ENCODE measurements at regions of chr7 and their contacts with region 1.

Region 1: GRCh38 chr7:4919969-4920766 is 36.7 kb upstream of the RADIL start:
- DNase-seq: no peak
- ATAC-seq: no peak

Region 2: DNA sequence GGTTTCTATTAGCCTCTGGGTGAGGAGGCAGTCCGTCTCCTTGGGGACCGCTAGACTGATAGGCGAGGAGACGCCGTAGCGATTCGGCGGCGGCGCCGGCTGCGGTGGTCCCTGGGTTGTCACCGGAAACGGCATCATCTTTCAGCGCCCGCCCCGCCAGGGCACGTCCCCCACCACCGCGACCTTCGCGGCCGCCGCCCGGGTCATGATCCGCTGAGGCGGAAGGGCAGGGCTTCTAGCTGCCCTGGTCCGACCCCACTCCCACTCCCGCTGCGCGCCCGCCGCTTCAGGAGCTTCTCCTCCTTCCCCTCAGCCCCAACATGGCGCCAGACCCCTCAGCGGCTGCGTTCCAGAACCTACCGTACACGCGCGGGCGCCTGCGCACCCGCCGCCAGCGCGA is 58.5 kb before region 1 on chr7 and contains the start of gene PAPOLB:
- intact Hi-C with region 1: loop called (anchors 5 kb)
- DNase-seq: no peak
- ATAC-seq: peak; percentile 39
- total RNA-seq, gene PAPOLB: 0.98 TPM

Region 3: GRCh38 chr7:5296611-5297226 is 376.6 kb after region 1 on chr7:
- intact Hi-C with region 1: no loop called
- DNase-seq: no peak
- ATAC-seq: peak; percentile 51